ENCODE measurements at regions of chr2 and their contacts with region 1.

Region 1: GRCh38 chr2:72887754-72888437 is 688 bp downstream of the SPR start:
- DNase-seq: peak; percentile 94
- H3K4me3 ChIP-seq: peak overlapping the region; percentile 76
- H3K27ac ChIP-seq: peak overlapping the region; percentile 71
- H3K4me1 ChIP-seq: peaks cover 4% of the 10 kb centered on the region
- H3K27me3 ChIP-seq: peaks cover 11% of the 10 kb centered on the region
- CTCF ChIP-seq: peak; percentile 97

Region 2: GRCh38 chr2:72770879-72771461 is 116.9 kb before region 1 on chr2:
- CTCF ChIA-PET with region 1: interaction called, 5 read pairs
- POLR2A ChIA-PET with region 1: no interaction called
- intact Hi-C with region 1: loop called (anchors 1 kb)
- DNase-seq: peak; percentile 82
- H3K4me3 ChIP-seq: no peak overlapping the region
- H3K27ac ChIP-seq: no peak overlapping the region
- H3K4me1 ChIP-seq: no peaks in the 10 kb centered on the region
- H3K27me3 ChIP-seq: no peaks in the 10 kb centered on the region
- CTCF ChIP-seq: peak; percentile 87

Region 3: GRCh38 chr2:72934683-72935610 is 47.1 kb after region 1 on chr2:
- CTCF ChIA-PET with region 1: interaction called, 4 read pairs
- POLR2A ChIA-PET with region 1: no interaction called
- intact Hi-C with region 1: loop called (anchors 2 kb)
- DNase-seq: peak; percentile 22
- H3K4me3 ChIP-seq: no peak overlapping the region
- H3K27ac ChIP-seq: no peak overlapping the region
- H3K4me1 ChIP-seq: no peaks in the 10 kb centered on the region
- H3K27me3 ChIP-seq: peaks cover 6% of the 10 kb centered on the region
- CTCF ChIP-seq: peak; percentile 43

Region 4: DNA sequence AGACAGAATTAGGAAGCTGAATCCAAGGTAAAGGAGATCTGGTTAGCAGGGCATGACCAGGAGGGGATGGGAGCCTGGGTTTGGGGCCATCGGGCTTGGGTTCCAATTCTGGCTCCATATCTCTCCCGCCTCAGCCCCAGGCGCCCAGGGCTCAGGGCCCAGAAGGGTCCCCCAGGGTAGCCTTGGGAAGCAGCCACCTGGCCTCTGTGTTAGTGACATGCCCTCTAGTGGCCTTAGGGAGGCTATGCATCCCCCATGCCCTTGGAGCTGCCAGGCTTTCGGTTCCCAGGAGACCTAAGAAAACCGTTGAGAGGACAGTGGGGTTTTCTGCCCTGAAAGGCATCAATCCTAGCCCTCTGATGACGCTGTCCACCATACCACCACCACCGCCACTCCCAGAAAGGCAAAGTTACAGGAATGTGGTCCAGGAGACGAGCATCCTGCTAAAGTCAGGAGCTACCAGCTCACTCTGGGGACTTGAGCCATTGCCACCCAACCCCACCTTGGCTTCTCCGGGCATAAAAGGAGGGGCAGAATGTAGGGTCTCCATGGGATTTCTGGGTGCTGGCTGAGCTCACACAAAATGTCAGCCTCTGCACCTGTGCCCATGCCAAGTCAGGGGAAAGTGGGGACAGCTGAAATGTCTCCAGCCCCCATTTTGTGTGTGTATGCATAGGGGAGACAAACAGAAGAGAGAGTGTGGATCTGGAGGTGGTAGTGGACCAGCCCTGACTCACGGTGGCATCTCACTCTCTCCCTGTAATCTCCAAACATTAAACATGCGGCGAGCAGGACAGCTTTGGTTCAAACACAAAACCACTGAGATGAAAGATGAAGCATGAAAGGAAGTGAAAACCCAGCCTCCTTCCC is 85.9 kb after region 1 on chr2:
- CTCF ChIA-PET with region 1: interaction called, 22 read pairs
- POLR2A ChIA-PET with region 1: no interaction called
- intact Hi-C with region 1: loop called (anchors 1 kb)
- DNase-seq: peak; percentile 81
- H3K4me3 ChIP-seq: no peak overlapping the region
- H3K27ac ChIP-seq: no peak overlapping the region
- H3K4me1 ChIP-seq: no peaks in the 10 kb centered on the region
- H3K27me3 ChIP-seq: no peaks in the 10 kb centered on the region
- CTCF ChIP-seq: peak; percentile 84

Region 5: GRCh38 chr2:73085691-73086360 is 197.9 kb after region 1 on chr2:
- CTCF ChIA-PET with region 1: no interaction called
- POLR2A ChIA-PET with region 1: no interaction called
- intact Hi-C with region 1: loop called (anchors 10 kb)
- DNase-seq: peak; percentile 82
- H3K4me3 ChIP-seq: no peak overlapping the region
- H3K27ac ChIP-seq: no peak overlapping the region
- H3K4me1 ChIP-seq: no peaks in the 10 kb centered on the region
- H3K27me3 ChIP-seq: no peaks in the 10 kb centered on the region
- CTCF ChIP-seq: peak; percentile 96

Region 6: GRCh38 chr2:73163483-73164367 is 275.8 kb after region 1 on chr2:
- CTCF ChIA-PET with region 1: interaction called, 3 read pairs
- POLR2A ChIA-PET with region 1: no interaction called
- intact Hi-C with region 1: loop called (anchors 2 kb)
- DNase-seq: peak; percentile 79
- H3K4me3 ChIP-seq: no peak overlapping the region
- H3K27ac ChIP-seq: no peak overlapping the region
- H3K4me1 ChIP-seq: no peaks in the 10 kb centered on the region
- H3K27me3 ChIP-seq: no peaks in the 10 kb centered on the region
- CTCF ChIP-seq: peak; percentile 88

Region 7: GRCh38 chr2:73176881-73177644 is 289.2 kb after region 1 on chr2:
- CTCF ChIA-PET with region 1: interaction called, 17 read pairs
- POLR2A ChIA-PET with region 1: no interaction called
- intact Hi-C with region 1: loop called (anchors 5 kb)
- DNase-seq: peak; percentile 95
- H3K4me3 ChIP-seq: peak overlapping the region; percentile 36
- H3K27ac ChIP-seq: no peak overlapping the region
- H3K4me1 ChIP-seq: peaks cover 18% of the 10 kb centered on the region
- H3K27me3 ChIP-seq: no peaks in the 10 kb centered on the region
- CTCF ChIP-seq: peak; percentile 99

Measured in A673 (cell line).